ENCODE measurements at regions of chr4 and their contacts with region 1.

Region 1: DNA sequence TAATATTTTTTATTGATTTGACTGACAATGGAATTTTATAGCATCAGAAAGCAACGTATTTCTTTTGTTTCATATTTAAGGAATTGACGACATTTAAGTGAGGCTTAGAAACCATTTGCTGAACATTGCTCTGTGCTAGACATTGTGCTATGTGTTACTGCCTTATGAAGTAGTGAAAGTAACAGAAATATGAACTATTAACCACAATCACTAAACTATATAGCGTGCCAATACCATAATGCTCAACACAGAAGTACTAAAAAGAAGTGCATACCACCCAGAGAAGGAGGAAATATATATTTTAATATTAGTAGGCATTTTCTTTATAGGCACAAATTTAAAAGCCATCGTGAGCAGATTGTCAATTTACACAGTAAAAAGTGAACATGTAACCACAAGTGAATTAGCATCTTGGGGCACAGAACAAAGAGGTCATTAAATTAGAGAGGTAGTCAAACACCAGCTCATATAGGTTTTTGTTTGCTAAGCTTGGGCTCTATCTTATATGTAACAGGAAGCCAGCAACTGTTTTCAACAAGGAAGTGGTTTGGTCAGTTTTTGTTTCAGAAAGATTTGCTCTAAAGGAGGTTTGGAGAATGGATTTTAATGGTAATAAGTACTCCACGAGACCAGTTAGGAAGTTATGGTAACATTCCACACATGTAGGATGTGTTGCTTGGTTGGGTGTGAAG is 270.7 kb downstream of the GRXCR1 start:
- DNase-seq: no peak

Region 2: DNA sequence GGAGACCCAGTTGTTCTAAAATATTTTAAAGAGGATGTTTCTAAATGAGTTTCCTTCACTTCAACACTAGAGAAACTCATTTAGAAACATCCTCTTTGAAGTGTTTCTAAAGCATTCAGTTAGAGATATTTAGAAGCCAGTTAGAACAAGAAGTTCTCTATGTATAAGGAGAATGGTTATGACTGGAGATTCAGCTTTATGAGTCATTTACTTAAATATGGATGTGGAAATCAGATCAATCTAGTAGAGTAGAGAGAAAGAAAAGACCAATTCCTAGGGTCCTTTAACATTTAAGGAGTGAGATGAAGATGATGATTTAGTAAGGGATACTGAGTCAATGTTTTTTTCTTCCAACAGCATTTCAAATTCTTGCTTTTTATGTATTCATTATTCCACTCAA is 36.7 kb before region 1 on chr4:
- intact Hi-C with region 1: loop called in 1 of 2 experiments (anchors 2 kb)
- DNase-seq: no peak

Measured in posterior vena cava (tissue), 2 donors.